Posterior vena cava (tissue), 2 donors: ENCODE measurements at regions of chr4 and their contacts with region 1.

Region 1: DNA sequence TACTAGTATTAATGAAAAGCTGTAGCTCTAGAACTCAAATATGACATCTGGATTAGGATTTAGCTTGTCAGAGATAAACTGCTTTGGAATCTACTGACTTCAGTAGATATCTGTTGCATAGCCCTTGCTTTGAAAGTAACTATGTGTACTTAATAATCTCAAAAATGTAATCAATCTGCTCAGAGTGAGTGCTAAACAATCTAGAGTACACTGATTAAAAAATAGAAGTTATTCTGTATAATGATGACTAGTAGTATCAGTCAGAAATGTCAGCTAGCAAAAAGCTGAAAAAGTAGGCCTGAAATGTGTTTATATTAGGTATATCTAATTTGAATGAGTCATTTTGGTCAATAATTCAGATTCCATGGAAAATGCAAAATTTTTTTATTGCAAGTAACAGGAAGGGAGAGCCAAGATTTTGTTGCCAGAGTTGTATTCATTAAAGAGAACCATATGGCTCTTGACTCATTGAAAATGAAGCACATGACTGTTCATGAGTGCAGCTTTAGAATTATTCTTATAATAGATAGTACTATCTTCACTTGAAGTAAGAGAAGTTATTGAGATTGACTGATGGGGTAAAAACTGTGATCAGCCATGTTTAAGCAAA is 20.0 kb downstream of the CLCN3 start:
- DNase-seq: no peak

Region 2: DNA sequence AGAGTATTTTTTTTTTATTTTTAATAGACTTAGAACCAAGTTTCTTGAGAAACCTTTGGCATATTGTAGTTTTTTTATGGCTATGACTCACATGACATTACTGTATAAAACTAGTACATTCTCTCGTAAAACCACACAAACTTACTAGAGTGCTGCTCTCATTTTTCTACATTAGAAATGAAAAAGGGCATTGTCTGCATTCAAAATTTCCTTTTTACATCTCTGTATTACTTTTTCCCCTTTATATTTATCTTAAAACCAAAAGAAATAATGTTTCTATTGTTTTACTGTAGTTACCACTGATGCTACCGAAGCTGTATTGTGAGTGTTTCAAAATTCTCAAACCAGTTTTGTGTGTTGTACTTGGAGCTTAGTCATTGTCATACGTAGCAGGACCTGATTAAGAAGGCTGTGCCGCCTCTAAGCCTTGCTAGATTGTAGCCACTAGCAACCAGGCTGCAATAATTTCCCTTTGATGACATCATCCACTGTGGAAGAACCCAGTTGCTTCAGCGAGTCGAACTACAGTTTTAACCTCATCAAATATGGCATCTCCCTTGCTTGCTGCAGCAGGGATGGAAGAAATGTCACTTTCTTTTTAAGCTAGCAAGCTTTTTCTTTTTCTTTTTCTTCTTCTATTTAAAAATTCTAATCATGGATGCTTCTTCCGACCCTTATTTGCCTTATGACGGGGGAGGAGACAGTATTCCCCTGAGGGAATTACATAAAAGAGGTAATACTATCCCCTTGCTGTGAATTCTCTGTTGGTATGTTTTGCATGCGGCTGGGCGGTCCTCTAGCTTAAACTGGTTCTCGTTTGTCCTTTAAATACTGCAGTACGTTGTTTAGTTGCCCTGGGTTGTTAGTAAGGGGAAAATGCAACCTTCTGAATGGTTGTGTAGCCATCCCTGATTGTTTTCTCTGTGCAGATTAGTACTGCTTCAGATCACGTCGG is 19.6 kb after region 1 on chr4:
- intact Hi-C with region 1: no loop called
- DNase-seq: no peak

Region 3: DNA sequence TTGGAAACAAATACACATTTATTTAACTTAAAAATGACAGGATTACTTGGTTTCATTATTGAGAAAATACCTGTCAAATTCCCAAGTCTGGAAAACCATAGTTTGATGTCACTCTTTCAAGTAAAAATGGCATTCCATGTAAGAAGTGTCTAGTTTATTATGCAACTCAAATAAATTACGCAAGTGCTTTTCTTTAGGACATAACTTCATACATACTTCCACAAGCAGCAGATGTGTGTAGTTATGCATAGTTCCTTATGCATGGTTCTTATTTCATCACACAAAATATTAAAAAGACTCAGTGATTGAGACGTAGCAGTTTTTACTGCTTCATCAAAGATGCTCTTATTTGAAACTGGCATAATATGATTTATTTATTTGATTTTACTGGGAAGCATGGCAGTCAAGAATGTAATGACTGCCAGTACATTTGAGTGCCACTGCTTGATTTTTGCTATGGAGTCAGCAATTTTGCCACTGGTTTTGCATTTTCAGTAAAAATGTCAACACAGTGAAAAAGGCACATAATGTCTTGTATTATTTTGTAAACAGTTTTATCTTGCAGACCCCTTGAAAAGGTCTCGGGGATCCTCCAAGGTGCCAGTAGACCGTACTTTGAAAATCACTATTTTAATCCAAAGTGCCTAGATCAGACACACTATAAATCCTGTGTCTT is 42.1 kb after region 1 on chr4:
- intact Hi-C with region 1: loop called in 1 of 2 experiments (anchors 2 kb)
- DNase-seq: no peak